CD14-positive monocyte (primary cell): ENCODE measurements at regions of chr18 and their contacts with region 1.

Region 1: GRCh38 chr18:9782073-9782857 is 74.2 kb downstream of the RAB31 start:
- DNase-seq: peak; percentile 80 to 91 (median 84)
- H3K4me3 ChIP-seq: peak overlapping the region in 1 of 3 experiments; percentile 14
- H3K4me3 Mint-ChIP-seq: no peak overlapping the region
- H3K27ac ChIP-seq: peak overlapping the region; percentile 79 to 86
- H3K27ac Mint-ChIP-seq: peak overlapping the region; percentile 89 to 96 (median 92)
- H3K4me1 ChIP-seq: peaks cover 50 to 68% of the 10 kb centered on the region in 2 donors
- H3K4me1 Mint-ChIP-seq: peaks cover 64% of the 10 kb centered on the region
- H3K27me3 ChIP-seq: no peaks in the 10 kb centered on the region
- H3K27me3 Mint-ChIP-seq: peaks cover 0 to 3% (median 0%) of the 10 kb centered on the region in 3 donors
- CTCF ChIP-seq: no peak

Region 2: DNA sequence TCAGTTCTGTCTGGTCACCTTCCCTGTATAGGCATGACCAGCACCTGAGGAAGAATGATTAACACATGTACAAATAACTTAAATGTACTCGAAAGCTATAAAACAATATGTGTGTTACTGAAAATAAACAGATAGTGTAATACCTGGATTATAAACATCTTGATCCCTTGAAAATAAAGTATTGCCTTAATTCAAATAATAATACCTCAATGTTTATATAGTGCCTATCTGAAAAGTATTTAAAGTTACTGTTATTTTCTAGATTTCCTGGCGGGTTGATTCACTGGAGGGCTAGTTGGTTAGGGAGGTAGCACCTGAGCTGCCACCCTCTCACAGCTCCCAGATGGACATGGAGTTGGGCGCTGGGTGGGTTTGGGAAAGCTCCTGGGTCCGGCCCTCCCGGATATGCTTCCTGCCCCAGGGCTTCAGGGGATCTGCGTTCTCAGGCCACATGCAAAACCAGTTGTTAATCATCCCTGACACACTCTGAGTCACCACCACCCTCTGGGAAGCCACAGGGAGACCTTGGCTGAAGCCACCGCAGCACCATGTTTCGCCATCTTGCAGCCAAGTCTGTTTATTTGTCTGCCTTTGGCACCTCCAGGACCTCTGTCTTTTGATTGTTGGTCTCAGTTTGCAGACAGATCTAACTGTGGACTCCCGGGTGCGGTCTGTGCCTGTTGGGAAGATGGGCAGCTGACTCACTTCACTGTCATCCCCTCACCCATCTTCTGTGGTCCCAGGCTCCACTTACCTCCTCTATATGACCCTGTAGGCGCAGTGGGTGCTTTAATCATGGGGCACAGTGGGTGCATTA is 38.9 kb before region 1 on chr18:
- intact Hi-C with region 1: loop called in 1 of 2 experiments (anchors 5 kb)
- DNase-seq: peak; percentile 81 to 93 (median 92)
- H3K4me3 ChIP-seq: peak overlapping the region in 1 of 3 experiments; percentile 66
- H3K4me3 Mint-ChIP-seq: peak overlapping the region in 1 of 2 donors; percentile 83
- H3K27ac ChIP-seq: peak overlapping the region; percentile 41 to 89
- H3K27ac Mint-ChIP-seq: peak overlapping the region; percentile 90 to 98 (median 96)
- H3K4me1 ChIP-seq: peaks cover 73 to 84% of the 10 kb centered on the region in 2 donors
- H3K4me1 Mint-ChIP-seq: peaks cover 84% of the 10 kb centered on the region
- H3K27me3 ChIP-seq: no peaks in the 10 kb centered on the region
- H3K27me3 Mint-ChIP-seq: no peaks in the 10 kb centered on the region
- CTCF ChIP-seq: no peak